ENCODE measurements at regions of chr14 and their contacts with region 1.

Region 1: GRCh38 chr14:54366736-54367735 is 29.8 kb upstream of the CDKN3 start:
- DNase-seq: peak; percentile 69
- H3K4me3 ChIP-seq: no peak overlapping the region
- H3K27ac ChIP-seq: no peak overlapping the region
- H3K4me1 ChIP-seq: peaks cover 38% of the 10 kb centered on the region
- H3K27me3 ChIP-seq: peaks cover 0 to 1% of the 10 kb centered on the region in 2 experiments
- CTCF ChIP-seq: peak; percentile 59 to 67
- POLR2A ChIP-seq: no peak

Region 2: GRCh38 chr14:54396493-54397335 is 29.7 kb after region 1 on chr14 and contains the start of gene CDKN3:
- CTCF ChIA-PET with region 1: interaction called, 15 read pairs
- POLR2A ChIA-PET with region 1: interaction called, 6 read pairs
- dilution Hi-C with region 1: no loop called
- intact Hi-C with region 1: loop called (anchors 2 kb)
- DNase-seq: peak; percentile 100
- H3K4me3 ChIP-seq: peak within 1 kb of the TSS; percentile 7 to 76 (median 61)
- H3K27ac ChIP-seq: peak within 1 kb of the TSS; percentile 14
- H3K4me1 ChIP-seq: peaks cover 8% of the 10 kb centered on the region
- H3K27me3 ChIP-seq: peaks cover 0 to 4% of the 10 kb centered on the region in 2 experiments
- CTCF ChIP-seq: peak in 1 of 2 donors; percentile 42
- POLR2A ChIP-seq: peak; percentile 65
- total RNA-seq, gene CDKN3: 52.0 and 53.2 TPM in 2 replicates

Region 3: GRCh38 chr14:54420013-54420809 is 53.2 kb after region 1 on chr14:
- CTCF ChIA-PET with region 1: interaction called, 68 read pairs
- POLR2A ChIA-PET with region 1: no interaction called
- dilution Hi-C with region 1: no loop called
- intact Hi-C with region 1: loop called (anchors 1 kb)
- DNase-seq: peak; percentile 75
- H3K4me3 ChIP-seq: no peak overlapping the region
- H3K27ac ChIP-seq: no peak overlapping the region
- H3K4me1 ChIP-seq: no peaks in the 10 kb centered on the region
- H3K27me3 ChIP-seq: no peaks in the 10 kb centered on the region
- CTCF ChIP-seq: peak; percentile 49 to 57
- POLR2A ChIP-seq: no peak

Region 4: GRCh38 chr14:54440873-54441868 is 74.1 kb after region 1 on chr14 and contains the start of gene CNIH1:
- CTCF ChIA-PET with region 1: interaction called, 7 read pairs
- POLR2A ChIA-PET with region 1: no interaction called
- dilution Hi-C with region 1: no loop called
- intact Hi-C with region 1: loop called (anchors 1 kb)
- DNase-seq: peak; percentile 94
- H3K4me3 ChIP-seq: peak within 1 kb of the TSS; percentile 50 to 90 (median 70)
- H3K27ac ChIP-seq: peak within 1 kb of the TSS; percentile 83
- H3K4me1 ChIP-seq: peaks cover 18% of the 10 kb centered on the region
- H3K27me3 ChIP-seq: peaks cover 10 to 17% of the 10 kb centered on the region in 2 experiments
- CTCF ChIP-seq: peak; percentile 82 to 95
- POLR2A ChIP-seq: peak; percentile 88
- total RNA-seq, gene CNIH1: 125 and 137 TPM in 2 replicates

Region 5: GRCh38 chr14:54488646-54489317 is 121.7 kb after region 1 on chr14 and contains the start of gene GMFB:
- CTCF ChIA-PET with region 1: no interaction called
- POLR2A ChIA-PET with region 1: no interaction called
- dilution Hi-C with region 1: no loop called
- intact Hi-C with region 1: loop called (anchors 1 kb)
- DNase-seq: peak; percentile 95
- H3K4me3 ChIP-seq: peak within 1 kb of the TSS; percentile 72 to 91 (median 81)
- H3K27ac ChIP-seq: peak within 1 kb of the TSS; percentile 97
- H3K4me1 ChIP-seq: peaks cover 13% of the 10 kb centered on the region
- H3K27me3 ChIP-seq: no peaks in the 10 kb centered on the region
- CTCF ChIP-seq: peak; percentile 28 to 58
- POLR2A ChIP-seq: peak; percentile 95
- total RNA-seq, gene GMFB: 35.5 and 52.0 TPM in 2 replicates

Region 6: GRCh38 chr14:54509546-54510501 is 142.8 kb after region 1 on chr14 and contains the start of gene CGRRF1:
- CTCF ChIA-PET with region 1: interaction called, 6 read pairs
- POLR2A ChIA-PET with region 1: no interaction called
- dilution Hi-C with region 1: no loop called
- intact Hi-C with region 1: loop called (anchors 5 kb)
- DNase-seq: peak; percentile 99
- H3K4me3 ChIP-seq: peak within 1 kb of the TSS; percentile 20 to 92 (median 91)
- H3K27ac ChIP-seq: peak within 1 kb of the TSS; percentile 10
- H3K4me1 ChIP-seq: peaks cover 9% of the 10 kb centered on the region
- H3K27me3 ChIP-seq: no peaks in the 10 kb centered on the region
- CTCF ChIP-seq: peak; percentile 18 to 65
- POLR2A ChIP-seq: peak; percentile 88
- total RNA-seq, gene CGRRF1: 15.7 and 15.8 TPM in 2 replicates

Region 7: DNA sequence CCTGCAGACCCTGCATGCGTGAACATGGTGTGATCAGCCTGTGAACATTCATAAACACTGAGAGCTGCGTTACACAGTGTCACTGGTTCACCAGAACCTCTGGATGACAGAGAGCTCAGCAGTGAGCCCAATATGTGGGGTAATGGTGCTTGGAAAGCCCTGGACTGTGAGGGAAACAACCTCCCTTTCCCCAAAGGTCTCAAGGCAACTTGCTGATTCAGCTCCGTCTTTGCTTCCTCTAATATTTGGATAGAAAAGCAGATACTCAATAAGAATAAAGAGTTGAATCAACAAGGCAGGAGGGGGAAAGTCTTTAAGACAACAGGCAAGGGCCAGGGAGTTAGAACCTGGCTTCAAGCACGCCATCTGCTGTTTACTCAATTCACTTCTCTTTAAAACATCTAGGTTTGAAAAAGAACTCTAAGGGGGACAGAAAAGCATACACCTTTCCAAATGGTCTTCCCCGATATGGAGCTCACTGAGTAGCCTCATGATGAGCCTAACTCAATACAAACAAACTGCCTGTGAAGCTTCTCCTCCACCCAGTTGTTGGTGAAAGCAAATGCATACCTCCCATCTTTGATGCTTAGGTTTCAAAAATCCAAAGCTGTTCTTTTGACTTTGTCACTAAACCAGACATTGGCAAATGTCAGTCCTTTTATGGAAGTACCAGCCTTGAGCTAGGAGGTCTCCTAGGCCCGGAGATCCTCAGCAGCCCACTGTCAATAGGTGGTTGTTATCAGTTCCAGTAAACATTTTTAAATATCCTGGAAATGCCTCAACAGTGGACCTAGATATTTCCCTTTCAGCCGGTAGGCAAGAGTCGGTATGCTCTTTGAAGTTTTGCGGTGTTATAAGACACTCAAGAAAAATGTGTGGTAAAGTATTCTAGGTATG is 276.0 kb after region 1 on chr14:
- CTCF ChIA-PET with region 1: no interaction called
- POLR2A ChIA-PET with region 1: no interaction called
- dilution Hi-C with region 1: no loop called
- intact Hi-C with region 1: no loop called
- DNase-seq: no peak
- H3K4me3 ChIP-seq: no peak overlapping the region
- H3K27ac ChIP-seq: no peak overlapping the region
- H3K4me1 ChIP-seq: peaks cover 4% of the 10 kb centered on the region
- H3K27me3 ChIP-seq: no peaks in the 10 kb centered on the region
- CTCF ChIP-seq: peak in 1 of 2 donors; percentile 26
- POLR2A ChIP-seq: no peak